AG04449 (cell line): ENCODE measurements at regions of chr4 and their contacts with region 1.

Region 1: DNA sequence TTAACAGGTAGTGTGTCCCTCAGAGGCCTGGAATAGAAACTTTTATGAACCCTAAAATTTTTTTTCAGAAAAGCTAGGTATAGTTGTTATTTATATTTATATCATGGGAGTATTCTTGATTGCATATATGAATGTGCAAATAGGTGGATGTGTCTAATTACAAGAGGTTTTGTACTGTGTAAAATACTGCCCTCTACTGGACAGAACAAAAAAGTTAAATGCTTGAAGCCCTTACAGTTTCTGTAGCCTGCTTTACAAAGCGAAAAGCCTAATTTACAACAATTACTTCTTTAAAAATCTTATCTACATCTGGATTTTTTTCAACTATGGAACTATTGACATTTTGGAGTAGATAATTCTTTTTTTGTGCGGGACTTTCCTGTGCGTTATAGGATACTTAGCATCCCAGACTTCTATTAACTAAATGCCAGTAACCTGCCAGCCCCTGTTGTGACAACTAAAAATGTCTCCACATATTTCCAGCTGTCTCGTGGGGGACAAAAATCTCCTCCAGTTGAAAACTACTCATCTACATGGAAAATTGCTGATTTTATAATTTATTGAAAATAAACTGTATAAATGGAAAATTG is 35.1 kb downstream of the ENPEP start:
- DNase-seq: peak; percentile 19
- H3K4me3 ChIP-seq: no peak overlapping the region
- CTCF ChIP-seq: peak; percentile 39

Region 2: DNA sequence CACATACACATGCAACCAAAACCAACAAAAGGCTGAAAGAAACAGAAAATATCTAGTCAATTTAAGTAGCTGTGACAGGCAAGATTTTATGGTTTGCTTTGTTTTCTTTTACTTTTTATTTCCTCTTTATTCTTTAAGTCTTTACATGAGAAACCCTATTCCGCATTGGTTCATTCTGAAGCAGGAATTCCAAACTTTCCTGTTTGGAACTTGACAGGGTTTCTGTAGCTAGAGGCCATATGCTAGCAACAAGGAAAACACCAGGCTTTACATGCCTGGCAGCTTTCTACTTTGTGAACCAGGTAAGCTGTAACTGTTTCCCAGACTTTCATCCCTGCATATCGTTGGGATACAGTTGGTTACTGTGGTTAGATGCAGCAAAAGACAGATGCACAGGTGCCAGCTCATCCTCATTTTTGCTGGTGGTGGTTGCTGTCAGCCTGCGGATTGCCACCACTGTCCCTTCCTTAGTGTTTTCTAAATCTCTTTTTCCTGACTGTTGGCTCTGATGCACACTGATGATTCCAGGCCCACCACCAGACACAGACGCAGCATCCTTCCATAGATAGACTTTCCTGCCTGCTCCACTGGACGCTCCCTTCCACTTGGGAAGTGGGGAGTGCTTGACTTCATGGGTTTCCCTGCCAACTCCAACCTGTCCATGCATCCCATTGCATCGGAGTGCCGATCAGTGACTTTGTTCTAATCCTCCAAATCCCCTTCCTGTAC is 497.0 kb before region 1 on chr4:
- CTCF ChIA-PET with region 1: interaction called, 1,033 read pairs
- POLR2A ChIA-PET with region 1: no interaction called
- DNase-seq: no peak
- H3K4me3 ChIP-seq: no peak overlapping the region
- CTCF ChIP-seq: no peak

Region 3: DNA sequence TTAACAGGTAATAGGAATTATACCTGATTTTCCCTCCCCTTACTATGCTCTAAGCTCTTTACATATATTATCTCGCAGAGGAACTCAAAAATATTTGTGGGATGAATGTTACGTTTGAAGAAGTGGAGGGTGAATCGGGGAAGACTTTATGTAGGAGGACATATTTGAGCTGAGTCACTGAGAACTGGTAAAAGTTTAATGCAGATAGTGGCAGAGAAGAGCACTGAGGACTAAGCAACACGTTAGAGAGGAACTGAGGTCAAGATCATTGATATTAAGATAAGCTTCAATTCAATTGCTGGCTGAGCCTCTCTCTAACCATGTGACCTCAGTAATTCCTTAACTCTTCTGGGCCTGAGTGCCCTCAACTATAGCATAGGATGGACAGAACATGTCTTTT is 286.2 kb before region 1 on chr4:
- CTCF ChIA-PET with region 1: interaction called, 11 read pairs
- POLR2A ChIA-PET with region 1: no interaction called
- DNase-seq: peak; percentile 12
- H3K4me3 ChIP-seq: no peak overlapping the region
- CTCF ChIP-seq: no peak

Region 4: DNA sequence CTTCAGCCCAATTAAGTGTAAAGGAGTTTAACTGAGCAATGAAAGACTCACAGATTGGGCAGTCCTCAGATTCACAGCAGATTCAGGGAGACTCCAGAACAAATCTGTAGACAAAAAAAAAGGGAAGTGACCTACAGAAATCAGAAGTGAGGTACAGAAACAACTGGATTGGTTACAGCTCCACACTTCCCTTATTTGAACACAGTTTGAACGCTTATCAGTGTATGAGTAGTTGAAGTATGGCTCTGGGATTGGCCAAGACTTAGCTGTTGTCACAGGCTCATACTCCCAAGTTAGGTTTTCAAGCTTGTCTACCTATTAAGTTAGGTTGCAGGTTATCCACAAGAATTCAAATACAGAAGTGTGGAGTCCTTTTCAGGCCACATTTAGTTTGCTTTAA is 200.3 kb before region 1 on chr4:
- CTCF ChIA-PET with region 1: interaction called, 154 read pairs
- POLR2A ChIA-PET with region 1: no interaction called
- DNase-seq: no peak
- H3K4me3 ChIP-seq: no peak overlapping the region
- CTCF ChIP-seq: no peak

Region 5: DNA sequence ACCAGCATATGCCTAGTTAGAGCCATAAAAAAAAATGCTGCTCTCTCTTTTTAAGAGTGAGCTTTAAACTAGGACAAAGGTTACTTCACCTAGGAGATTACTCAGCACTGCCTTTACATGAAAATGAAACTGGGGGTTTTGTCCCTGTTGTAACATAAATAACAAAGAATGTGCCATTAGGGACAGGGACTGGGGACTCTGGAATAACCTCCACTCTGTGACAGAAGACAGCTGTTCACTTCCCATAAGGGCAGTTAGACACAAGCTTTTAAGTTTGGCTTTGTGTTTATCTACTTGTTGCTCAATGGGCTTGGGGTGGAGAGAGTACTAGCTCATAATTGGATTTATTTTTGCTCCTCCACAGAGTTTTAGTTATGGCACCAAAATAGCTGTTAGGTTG is 23.2 kb before region 1 on chr4:
- CTCF ChIA-PET with region 1: interaction called, 12 read pairs
- POLR2A ChIA-PET with region 1: no interaction called
- DNase-seq: no peak
- H3K4me3 ChIP-seq: no peak overlapping the region
- CTCF ChIP-seq: no peak